Heart right ventricle (tissue), 16 donors: ENCODE measurements at regions of chrX and their contacts with region 1.

Region 1: GRCh38 chrX:109475174-109475891 is 6.6 kb downstream of the GUCY2F start:
- DNase-seq: peak in 1 of 2 donors; percentile 14
- ATAC-seq: peak in 6 of 8 donors; percentile 38 to 80 (median 70)
- H3K4me3 ChIP-seq: peak overlapping the region in 3 of 10 donors; percentile 4 to 17 (median 10)
- H3K27ac ChIP-seq: no peak overlapping the region
- H3K4me1 ChIP-seq: peaks cover 0 to 7% (median 0%) of the 10 kb centered on the region in 9 donors
- H3K27me3 ChIP-seq: peaks cover 0 to 91% (median 0%) of the 10 kb centered on the region in 7 donors
- CTCF ChIP-seq: peak in 7 of 9 donors; percentile 46 to 61 (median 53)

Region 2: GRCh38 chrX:108199691-108200090 is 1275.6 kb before region 1 on chrX:
- intact Hi-C with region 1: loop called in 4 of 10 experiments (anchors 10 kb)
- DNase-seq: no peak
- ATAC-seq: no peak
- H3K4me3 ChIP-seq: no peak overlapping the region
- H3K27ac ChIP-seq: no peak overlapping the region
- H3K4me1 ChIP-seq: no peaks in the 10 kb centered on the region
- H3K27me3 ChIP-seq: peaks cover 0 to 76% (median 0%) of the 10 kb centered on the region in 7 donors
- CTCF ChIP-seq: peak in 8 of 9 donors; percentile 26 to 58 (median 54)

Region 3: GRCh38 chrX:108699368-108699767 is 776.0 kb before region 1 on chrX:
- intact Hi-C with region 1: loop called in 3 of 10 experiments (anchors 5 kb)
- DNase-seq: no peak
- ATAC-seq: peak in 1 of 8 donors; percentile 20
- H3K4me3 ChIP-seq: no peak overlapping the region
- H3K27ac ChIP-seq: no peak overlapping the region
- H3K4me1 ChIP-seq: no peaks in the 10 kb centered on the region
- H3K27me3 ChIP-seq: peaks cover 0 to 23% (median 0%) of the 10 kb centered on the region in 7 donors
- CTCF ChIP-seq: peak in 5 of 9 donors; percentile 25 to 37 (median 33)

Region 4: GRCh38 chrX:109327251-109327650 is 148.1 kb before region 1 on chrX:
- intact Hi-C with region 1: no loop called
- DNase-seq: no peak
- ATAC-seq: no peak
- H3K4me3 ChIP-seq: no peak overlapping the region
- H3K27ac ChIP-seq: no peak overlapping the region
- H3K4me1 ChIP-seq: no peaks in the 10 kb centered on the region
- H3K27me3 ChIP-seq: peaks cover 0 to 5% (median 0%) of the 10 kb centered on the region in 7 donors
- CTCF ChIP-seq: no peak